GM12878 (cell line): ENCODE measurements at regions of chrX and their contacts with region 1.

Region 1: GRCh38 chrX:97685753-97686152 is 802.0 kb downstream of the RPA4 start:
- DNase-seq: no peak
- ATAC-seq: peak; percentile 84
- H3K4me3 ChIP-seq: no peak overlapping the region
- H3K27ac ChIP-seq: no peak overlapping the region
- H3K4me1 ChIP-seq: no peaks in the 10 kb centered on the region
- H3K27me3 ChIP-seq: no peaks in the 10 kb centered on the region
- CTCF ChIP-seq: peak; percentile 63 to 69 (median 64)
- EP300 ChIP-seq: no peak
- POLR2A ChIP-seq: no peak
- RAD21 ChIP-seq: peak; percentile 59

Region 2: GRCh38 chrX:96764864-96765263 is 920.9 kb before region 1 on chrX:
- CTCF ChIA-PET with region 1: interaction called, 23 read pairs
- POLR2A ChIA-PET with region 1: no interaction called
- RAD21 ChIA-PET with region 1: interaction called, 4 read pairs
- SMC1A ChIA-PET with region 1: interaction called, 18 read pairs
- in situ Hi-C with region 1: loop called (anchors 10 kb)
- intact Hi-C with region 1: loop called (anchors 2 kb)
- DNase-seq: no peak
- ATAC-seq: peak; percentile 84
- H3K4me3 ChIP-seq: no peak overlapping the region
- H3K27ac ChIP-seq: no peak overlapping the region
- H3K4me1 ChIP-seq: peaks cover 3% of the 10 kb centered on the region
- H3K27me3 ChIP-seq: no peaks in the 10 kb centered on the region
- CTCF ChIP-seq: no peak
- EP300 ChIP-seq: no peak
- POLR2A ChIP-seq: no peak
- RAD21 ChIP-seq: no peak

Region 3: GRCh38 chrX:96770315-96770714 is 915.4 kb before region 1 on chrX:
- CTCF ChIA-PET with region 1: interaction called, 23 read pairs
- POLR2A ChIA-PET with region 1: no interaction called
- RAD21 ChIA-PET with region 1: interaction called, 4 read pairs
- SMC1A ChIA-PET with region 1: interaction called, 18 read pairs
- in situ Hi-C with region 1: loop called (anchors 10 kb)
- intact Hi-C with region 1: loop called (anchors 2 kb)
- DNase-seq: no peak
- ATAC-seq: no peak
- H3K4me3 ChIP-seq: no peak overlapping the region
- H3K27ac ChIP-seq: no peak overlapping the region
- H3K4me1 ChIP-seq: no peaks in the 10 kb centered on the region
- H3K27me3 ChIP-seq: no peaks in the 10 kb centered on the region
- CTCF ChIP-seq: peak; percentile 13 to 54 (median 14); a peak in 4 of 6 replicates
- EP300 ChIP-seq: no peak
- POLR2A ChIP-seq: no peak
- RAD21 ChIP-seq: peak; percentile 76

Region 4: DNA sequence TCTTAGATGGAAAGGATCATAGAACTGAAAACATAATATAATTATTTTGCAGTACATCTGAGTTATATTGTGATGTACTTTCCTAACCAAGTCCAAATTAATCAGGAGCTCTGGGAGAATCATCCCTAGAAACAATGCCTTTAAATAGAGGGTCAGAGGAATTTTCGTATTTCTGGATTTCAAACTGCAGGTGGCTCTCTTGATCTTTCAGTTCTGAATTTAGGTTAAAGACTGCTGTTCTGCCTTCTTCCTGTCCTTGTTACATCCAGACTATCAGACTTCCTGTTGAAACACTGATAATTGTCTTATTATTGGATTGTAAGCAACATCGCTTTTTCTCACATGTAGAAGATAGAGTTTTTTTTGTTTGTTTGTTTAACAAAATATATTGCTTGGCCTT is 659.3 kb before region 1 on chrX:
- CTCF ChIA-PET with region 1: no interaction called
- POLR2A ChIA-PET with region 1: no interaction called
- RAD21 ChIA-PET with region 1: interaction called, 3 read pairs
- SMC1A ChIA-PET with region 1: no interaction called
- in situ Hi-C with region 1: no loop called
- intact Hi-C with region 1: loop called (anchors 5 kb)
- DNase-seq: no peak
- ATAC-seq: no peak
- H3K4me3 ChIP-seq: no peak overlapping the region
- H3K27ac ChIP-seq: no peak overlapping the region
- H3K4me1 ChIP-seq: no peaks in the 10 kb centered on the region
- H3K27me3 ChIP-seq: no peaks in the 10 kb centered on the region
- CTCF ChIP-seq: peak in 1 of 3 experiments; percentile 24; a peak in 2 of 6 replicates
- EP300 ChIP-seq: no peak
- POLR2A ChIP-seq: no peak
- RAD21 ChIP-seq: peak; percentile 56

Region 5: DNA sequence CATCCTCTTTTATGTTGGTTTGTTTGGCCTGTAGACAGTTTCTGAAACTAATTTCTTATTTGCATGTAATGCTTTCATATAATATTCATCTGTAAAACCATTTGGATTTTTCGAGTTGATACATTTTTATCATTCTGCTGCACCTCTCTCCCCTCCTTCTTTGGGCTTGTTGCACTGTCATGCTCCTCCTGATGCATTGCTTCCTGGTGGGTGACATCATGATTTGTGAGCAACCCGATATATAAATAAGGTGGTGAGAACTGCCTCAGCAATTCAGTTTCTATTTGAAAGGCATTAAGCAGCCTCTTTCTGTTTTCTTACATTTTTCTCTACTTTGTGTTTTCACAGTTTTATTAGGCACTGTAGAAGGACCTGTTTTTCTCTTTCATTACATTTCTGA is 286.4 kb before region 1 on chrX:
- CTCF ChIA-PET with region 1: no interaction called
- POLR2A ChIA-PET with region 1: no interaction called
- RAD21 ChIA-PET with region 1: no interaction called
- SMC1A ChIA-PET with region 1: no interaction called
- in situ Hi-C with region 1: no loop called
- intact Hi-C with region 1: loop called (anchors 5 kb)
- DNase-seq: peak; percentile 44
- ATAC-seq: peak; percentile 63
- H3K4me3 ChIP-seq: no peak overlapping the region
- H3K27ac ChIP-seq: peak overlapping the region; percentile 33; the same call in 1 of the 2 replicates
- H3K4me1 ChIP-seq: peaks cover 23% of the 10 kb centered on the region
- H3K27me3 ChIP-seq: no peaks in the 10 kb centered on the region
- CTCF ChIP-seq: no peak
- EP300 ChIP-seq: no peak
- POLR2A ChIP-seq: no peak
- RAD21 ChIP-seq: no peak

Region 6: DNA sequence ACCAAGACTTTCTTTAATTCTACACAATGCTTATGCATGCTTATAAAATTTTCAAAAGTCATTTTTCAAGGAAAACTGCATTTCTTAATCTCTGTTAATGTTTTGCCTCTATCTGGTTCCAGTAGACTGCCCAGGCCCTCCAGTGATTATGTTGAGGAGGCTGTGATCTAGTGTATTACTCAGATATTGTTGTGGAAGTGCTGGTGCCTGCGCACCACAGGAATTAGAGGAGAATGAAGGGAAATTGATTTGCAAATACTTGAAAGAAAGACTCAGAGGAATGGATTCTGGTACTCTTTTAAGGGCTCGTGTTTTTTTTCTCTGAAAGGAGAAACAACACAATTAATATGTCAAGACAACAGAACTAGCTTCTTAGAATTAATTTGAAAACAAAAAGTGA is 213.0 kb after region 1 on chrX:
- CTCF ChIA-PET with region 1: no interaction called
- POLR2A ChIA-PET with region 1: no interaction called
- RAD21 ChIA-PET with region 1: no interaction called
- SMC1A ChIA-PET with region 1: no interaction called
- in situ Hi-C with region 1: no loop called
- intact Hi-C with region 1: no loop called
- DNase-seq: no peak
- ATAC-seq: no peak
- H3K4me3 ChIP-seq: no peak overlapping the region
- H3K27ac ChIP-seq: no peak overlapping the region
- H3K4me1 ChIP-seq: no peaks in the 10 kb centered on the region
- H3K27me3 ChIP-seq: no peaks in the 10 kb centered on the region
- CTCF ChIP-seq: no peak
- EP300 ChIP-seq: no peak
- POLR2A ChIP-seq: no peak
- RAD21 ChIP-seq: no peak